ENCODE measurements at regions of chr14 and their contacts with region 1.

Region 1: GRCh38 chr14:89697281-89698060 is 257.1 kb downstream of the EFCAB11 start:
- DNase-seq: no peak
- ATAC-seq: no peak

Region 2: GRCh38 chr14:89625244-89625713 is 72.2 kb before region 1 on chr14:
- intact Hi-C with region 1: loop called in 1 of 2 experiments (anchors 10 kb)
- DNase-seq: peak; percentile 30
- ATAC-seq: peak; percentile 40 to 57

Region 3: DNA sequence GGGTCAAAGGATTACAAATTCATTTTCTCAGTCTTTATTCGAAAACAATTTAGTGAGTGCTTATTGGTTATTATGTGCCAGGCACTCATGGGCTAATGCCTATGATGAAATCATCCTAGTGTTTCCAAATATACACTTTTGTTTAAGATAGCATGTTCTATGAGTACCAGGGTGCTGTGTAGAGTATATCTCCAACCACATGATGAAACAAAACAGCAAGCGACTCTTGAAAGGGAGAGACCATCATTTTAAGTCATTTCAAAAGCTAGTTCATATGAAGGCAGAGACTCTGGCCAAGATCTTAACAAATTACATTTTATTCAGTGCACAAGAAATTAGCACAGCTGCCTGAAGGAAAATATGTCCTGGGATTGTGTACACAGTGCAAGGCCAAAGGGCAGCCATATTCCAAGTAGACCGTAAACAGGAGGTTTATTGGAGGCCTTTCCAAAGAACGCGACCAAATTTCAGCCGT is 52.8 kb after region 1 on chr14:
- intact Hi-C with region 1: no loop called
- DNase-seq: no peak
- ATAC-seq: peak in 1 of 2 donors; percentile 63